Natural killer cell (primary cell): ENCODE measurements at regions of chrX and their contacts with region 1.

Region 1: GRCh38 chrX:107776649-107777535 is 641 bp upstream of the NCBP2L start:
- DNase-seq: peak; percentile 29 to 88
- ATAC-seq: peak; percentile 82 to 93 (median 87)
- H3K4me3 ChIP-seq: peak overlapping the region; percentile 62
- H3K4me3 Mint-ChIP-seq: peak overlapping the region; percentile 87
- H3K27ac ChIP-seq: no peak overlapping the region
- H3K27ac Mint-ChIP-seq: peak overlapping the region; percentile 52 to 75
- H3K4me1 ChIP-seq: peaks cover 23% of the 10 kb centered on the region
- H3K4me1 Mint-ChIP-seq: peaks cover 14 to 19% of the 10 kb centered on the region in 2 donors
- H3K27me3 ChIP-seq: no peaks in the 10 kb centered on the region
- H3K27me3 Mint-ChIP-seq: peaks cover 0 to 11% of the 10 kb centered on the region in 2 donors
- CTCF ChIP-seq: peak; percentile 56

Region 2: GRCh38 chrX:106898462-106898861 is 878.4 kb before region 1 on chrX:
- intact Hi-C with region 1: loop called (anchors 5 kb)
- DNase-seq: peak in 1 of 2 donors; percentile 63
- ATAC-seq: peak in 1 of 3 donors; percentile 70
- H3K4me3 ChIP-seq: no peak overlapping the region
- H3K4me3 Mint-ChIP-seq: no peak overlapping the region
- H3K27ac ChIP-seq: no peak overlapping the region
- H3K27ac Mint-ChIP-seq: no peak overlapping the region
- H3K4me1 ChIP-seq: no peaks in the 10 kb centered on the region
- H3K4me1 Mint-ChIP-seq: no peaks in the 10 kb centered on the region
- H3K27me3 ChIP-seq: no peaks in the 10 kb centered on the region
- H3K27me3 Mint-ChIP-seq: peaks cover 0 to 10% of the 10 kb centered on the region in 2 donors
- CTCF ChIP-seq: peak; percentile 14

Region 3: DNA sequence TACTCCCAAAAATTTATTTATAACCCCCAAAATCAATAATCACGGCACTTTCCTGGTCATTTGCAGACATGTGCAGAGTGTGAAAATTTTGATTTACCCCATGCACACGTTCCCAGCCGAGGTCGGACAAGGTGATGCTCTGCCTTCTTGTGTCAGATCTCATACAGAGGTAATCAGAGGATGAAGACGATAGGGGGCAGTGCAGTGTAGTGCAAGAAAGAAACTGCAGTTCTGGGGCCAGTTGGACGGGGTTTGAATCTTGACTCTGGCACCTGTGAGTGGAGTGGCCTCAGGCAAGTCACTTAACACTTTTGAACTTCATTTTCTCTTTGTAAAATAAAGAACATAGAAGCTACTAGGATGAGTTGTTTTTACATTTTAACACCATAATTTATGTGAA is 239.1 kb before region 1 on chrX:
- intact Hi-C with region 1: loop called (anchors 2 kb)
- DNase-seq: peak in 1 of 2 donors; percentile 60
- ATAC-seq: peak in 1 of 3 donors; percentile 59
- H3K4me3 ChIP-seq: no peak overlapping the region
- H3K4me3 Mint-ChIP-seq: no peak overlapping the region
- H3K27ac ChIP-seq: no peak overlapping the region
- H3K27ac Mint-ChIP-seq: no peak overlapping the region
- H3K4me1 ChIP-seq: no peaks in the 10 kb centered on the region
- H3K4me1 Mint-ChIP-seq: peaks cover 0 to 5% of the 10 kb centered on the region in 2 donors
- H3K27me3 ChIP-seq: no peaks in the 10 kb centered on the region
- H3K27me3 Mint-ChIP-seq: no peaks in the 10 kb centered on the region
- CTCF ChIP-seq: no peak

Region 4: GRCh38 chrX:107565931-107566602 is 210.8 kb before region 1 on chrX:
- intact Hi-C with region 1: no loop called
- DNase-seq: no peak
- ATAC-seq: no peak
- H3K4me3 ChIP-seq: no peak overlapping the region
- H3K4me3 Mint-ChIP-seq: no peak overlapping the region
- H3K27ac ChIP-seq: no peak overlapping the region
- H3K27ac Mint-ChIP-seq: no peak overlapping the region
- H3K4me1 ChIP-seq: no peaks in the 10 kb centered on the region
- H3K4me1 Mint-ChIP-seq: no peaks in the 10 kb centered on the region
- H3K27me3 ChIP-seq: no peaks in the 10 kb centered on the region
- H3K27me3 Mint-ChIP-seq: no peaks in the 10 kb centered on the region
- CTCF ChIP-seq: no peak

Region 5: GRCh38 chrX:107654872-107655761 is 121.8 kb before region 1 on chrX:
- intact Hi-C with region 1: loop called (anchors 1 kb)
- DNase-seq: peak; percentile 52 to 82
- ATAC-seq: peak; percentile 87 to 91 (median 89)
- H3K4me3 ChIP-seq: no peak overlapping the region
- H3K4me3 Mint-ChIP-seq: no peak overlapping the region
- H3K27ac ChIP-seq: no peak overlapping the region
- H3K27ac Mint-ChIP-seq: no peak overlapping the region
- H3K4me1 ChIP-seq: peaks cover 4% of the 10 kb centered on the region
- H3K4me1 Mint-ChIP-seq: peaks cover 0 to 5% of the 10 kb centered on the region in 2 donors
- H3K27me3 ChIP-seq: no peaks in the 10 kb centered on the region
- H3K27me3 Mint-ChIP-seq: no peaks in the 10 kb centered on the region
- CTCF ChIP-seq: peak; percentile 64

Region 6: DNA sequence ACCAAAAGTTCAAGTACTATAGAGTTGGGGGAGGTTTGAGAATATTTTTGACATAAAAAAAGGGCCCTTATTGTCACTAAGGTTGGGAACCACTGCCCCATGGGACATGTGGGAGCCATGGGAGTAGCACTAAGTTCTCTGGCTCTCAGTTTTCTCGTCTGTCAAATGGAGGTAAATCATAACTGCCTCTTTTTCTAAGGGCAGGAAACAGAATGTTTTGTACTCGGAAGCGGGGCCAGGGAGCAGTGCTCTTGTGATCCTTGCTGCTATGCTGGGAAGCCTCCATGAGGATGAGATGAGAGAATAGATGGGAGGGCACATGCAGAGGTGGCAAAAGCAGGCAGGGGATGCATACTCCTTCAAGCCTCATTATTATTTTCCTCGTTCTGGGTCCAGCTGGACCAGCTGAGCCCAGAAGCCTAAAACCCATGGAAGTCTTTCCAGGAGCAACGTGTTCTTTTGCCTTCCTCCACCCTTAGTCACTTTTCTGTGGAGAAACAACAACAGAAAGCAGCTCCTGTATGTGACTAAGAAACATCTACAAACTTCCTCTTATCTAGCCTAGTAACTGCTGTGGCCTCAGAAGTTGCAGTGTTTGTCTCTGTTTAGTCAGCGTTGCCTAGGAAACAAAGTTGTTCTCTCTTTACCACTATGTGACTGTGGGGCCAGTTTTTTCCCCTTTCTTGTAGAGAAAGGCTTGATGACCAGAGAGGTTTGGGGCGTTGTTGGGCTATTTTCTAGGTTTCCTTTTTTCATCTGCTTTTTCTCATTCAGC is 66.1 kb before region 1 on chrX:
- intact Hi-C with region 1: loop called (anchors 5 kb)
- DNase-seq: peak; percentile 17 to 91
- ATAC-seq: peak; percentile 58 to 86 (median 72)
- H3K4me3 ChIP-seq: no peak overlapping the region
- H3K4me3 Mint-ChIP-seq: peak overlapping the region; percentile 92
- H3K27ac ChIP-seq: peak overlapping the region; percentile 100
- H3K27ac Mint-ChIP-seq: peak overlapping the region; percentile 99
- H3K4me1 ChIP-seq: peaks cover 59% of the 10 kb centered on the region
- H3K4me1 Mint-ChIP-seq: peaks cover 46 to 55% of the 10 kb centered on the region in 2 donors
- H3K27me3 ChIP-seq: no peaks in the 10 kb centered on the region
- H3K27me3 Mint-ChIP-seq: no peaks in the 10 kb centered on the region
- CTCF ChIP-seq: no peak